ENCODE measurements at regions of chr16 and their contacts with region 1.

Region 1: DNA sequence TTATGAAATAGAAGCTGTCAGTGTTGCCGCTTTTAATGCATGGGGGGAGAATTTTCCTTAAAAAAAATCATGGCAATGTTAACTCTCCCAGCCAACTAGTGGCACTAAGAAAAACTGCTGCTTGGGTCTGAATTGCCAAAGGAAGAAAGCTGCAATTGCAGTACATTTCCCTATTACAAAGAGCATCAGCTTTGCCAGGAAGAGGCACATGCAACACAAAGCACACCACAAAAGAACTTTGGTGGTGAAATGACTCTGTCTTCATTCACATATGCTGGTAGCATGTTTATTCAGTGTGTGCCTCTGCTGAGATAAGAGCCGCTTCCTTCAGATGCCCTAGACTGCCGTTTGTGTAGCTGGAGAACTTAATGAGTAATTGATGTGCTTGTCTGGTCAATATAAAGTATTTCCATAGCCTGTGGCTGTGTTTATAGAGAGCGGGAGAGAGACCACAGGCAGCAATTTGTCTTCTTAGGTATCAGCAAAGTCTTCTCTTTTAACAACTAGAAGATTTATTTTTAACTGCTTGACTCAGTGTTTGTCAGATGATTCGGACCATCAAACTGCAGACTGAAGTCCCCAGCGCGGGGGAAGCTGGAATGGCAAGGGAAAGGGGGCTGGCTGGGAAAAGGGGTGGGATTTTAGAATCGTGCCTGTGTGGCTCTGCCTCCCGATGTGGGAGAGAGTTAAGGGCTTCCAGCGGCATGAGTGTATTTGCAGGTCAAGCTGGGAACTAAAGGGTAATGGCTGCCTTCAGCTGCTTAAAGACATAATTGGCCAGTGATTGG is 115.1 kb downstream of the MRTFB start:
- DNase-seq: no peak
- H3K4me3 ChIP-seq: no peak overlapping the region
- H3K4me3 Mint-ChIP-seq: peak overlapping the region in 2 of 8 donors; percentile 7 to 52
- H3K27ac ChIP-seq: no peak overlapping the region
- H3K27ac Mint-ChIP-seq: peak overlapping the region in 1 of 7 donors; percentile 67
- H3K4me1 ChIP-seq: no peaks in the 10 kb centered on the region
- H3K4me1 Mint-ChIP-seq: peaks cover 0 to 11% (median 1%) of the 10 kb centered on the region in 4 donors
- H3K27me3 ChIP-seq: no peaks in the 10 kb centered on the region
- H3K27me3 Mint-ChIP-seq: no peaks in the 10 kb centered on the region

Region 2: GRCh38 chr16:13982451-13982850 is 203.8 kb before region 1 on chr16:
- CTCF ChIA-PET with region 1: no interaction called
- POLR2A ChIA-PET with region 1: no interaction called
- intact Hi-C with region 1: no loop called
- DNase-seq: no peak
- H3K4me3 ChIP-seq: no peak overlapping the region
- H3K4me3 Mint-ChIP-seq: no peak overlapping the region
- H3K27ac ChIP-seq: no peak overlapping the region
- H3K27ac Mint-ChIP-seq: no peak overlapping the region
- H3K4me1 ChIP-seq: no peaks in the 10 kb centered on the region
- H3K4me1 Mint-ChIP-seq: no peaks in the 10 kb centered on the region
- H3K27me3 ChIP-seq: no peaks in the 10 kb centered on the region
- H3K27me3 Mint-ChIP-seq: peaks cover 0 to 5% of the 10 kb centered on the region in 2 donors

Region 3: GRCh38 chr16:14121142-14121541 is 65.1 kb before region 1 on chr16:
- CTCF ChIA-PET with region 1: no interaction called
- POLR2A ChIA-PET with region 1: no interaction called
- intact Hi-C with region 1: loop called (anchors 10 kb)
- DNase-seq: no peak
- H3K4me3 ChIP-seq: no peak overlapping the region
- H3K4me3 Mint-ChIP-seq: no peak overlapping the region
- H3K27ac ChIP-seq: no peak overlapping the region
- H3K27ac Mint-ChIP-seq: no peak overlapping the region
- H3K4me1 ChIP-seq: no peaks in the 10 kb centered on the region
- H3K4me1 Mint-ChIP-seq: peaks cover 4 to 12% (median 9%) of the 10 kb centered on the region in 4 donors
- H3K27me3 ChIP-seq: no peaks in the 10 kb centered on the region
- H3K27me3 Mint-ChIP-seq: no peaks in the 10 kb centered on the region